B cell (primary cell): ENCODE measurements at regions of chr4 and their contacts with region 1.

Region 1: DNA sequence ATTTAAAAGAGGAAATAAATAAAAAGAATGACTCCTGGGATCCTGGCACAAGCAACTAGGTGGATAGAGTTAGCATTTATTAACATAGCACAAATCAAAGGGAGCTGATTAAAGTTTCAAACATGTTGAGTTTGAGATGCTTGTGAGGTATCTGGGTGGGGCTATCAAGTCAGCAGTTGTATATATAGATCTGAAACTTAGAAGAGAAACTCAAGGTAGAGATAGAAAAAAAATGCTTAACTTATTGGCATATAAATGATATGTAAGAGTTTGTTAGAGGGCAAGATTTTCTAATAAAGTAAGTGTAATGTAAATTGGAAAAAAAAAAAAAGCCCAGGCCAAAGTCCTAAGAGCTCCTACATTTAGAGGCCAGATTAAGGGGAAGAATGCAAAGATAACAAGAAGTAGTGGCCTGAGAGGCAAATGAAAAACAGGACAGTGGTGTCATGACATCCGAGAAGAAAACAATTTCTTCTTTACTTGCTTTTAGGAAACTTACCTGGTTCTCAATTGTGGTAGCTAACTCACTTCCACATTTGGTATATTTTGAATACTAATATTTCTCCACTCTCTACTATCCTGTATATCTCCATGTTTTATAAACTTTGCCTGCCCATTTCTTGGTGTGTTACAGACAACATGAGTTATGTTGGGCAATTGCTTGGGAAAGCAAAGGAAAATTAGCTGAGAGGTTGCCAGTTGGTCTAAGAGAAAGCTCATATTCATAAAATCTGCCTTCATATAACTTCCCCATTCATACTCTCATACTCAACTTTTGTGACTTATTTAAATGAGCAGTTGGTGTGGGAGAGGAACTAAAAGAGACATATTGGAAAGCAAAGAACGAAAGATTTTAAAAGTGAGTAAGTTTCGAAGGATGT is 169.2 kb downstream of the PARM1 start:
- DNase-seq: peak; percentile 59
- ATAC-seq: peak; percentile 52
- H3K4me3 ChIP-seq: peak overlapping the region in 1 of 5 experiments; percentile 1
- H3K4me3 Mint-ChIP-seq: peak overlapping the region; percentile 74
- H3K27ac ChIP-seq: peak overlapping the region; percentile 58 to 74
- H3K27ac Mint-ChIP-seq: peak overlapping the region; percentile 90
- H3K4me1 ChIP-seq: peaks cover 51 to 57% of the 10 kb centered on the region in 2 donors
- H3K4me1 Mint-ChIP-seq: peaks cover 56% of the 10 kb centered on the region
- H3K27me3 ChIP-seq: no peaks in the 10 kb centered on the region
- H3K27me3 Mint-ChIP-seq: no peaks in the 10 kb centered on the region
- CTCF ChIP-seq: no peak

Region 2: GRCh38 chr4:74975848-74976824 is 126.0 kb before region 1 on chr4:
- CTCF ChIA-PET with region 1: no interaction called
- POLR2A ChIA-PET with region 1: no interaction called
- intact Hi-C with region 1: no loop called
- DNase-seq: no peak
- ATAC-seq: no peak
- H3K4me3 ChIP-seq: no peak overlapping the region
- H3K4me3 Mint-ChIP-seq: no peak overlapping the region
- H3K27ac ChIP-seq: no peak overlapping the region
- H3K27ac Mint-ChIP-seq: no peak overlapping the region
- H3K4me1 ChIP-seq: no peaks in the 10 kb centered on the region
- H3K4me1 Mint-ChIP-seq: no peaks in the 10 kb centered on the region
- H3K27me3 ChIP-seq: no peaks in the 10 kb centered on the region
- H3K27me3 Mint-ChIP-seq: no peaks in the 10 kb centered on the region
- CTCF ChIP-seq: no peak

Region 3: GRCh38 chr4:75118739-75119138 is 16.6 kb after region 1 on chr4:
- CTCF ChIA-PET with region 1: interaction called, 12 read pairs
- POLR2A ChIA-PET with region 1: no interaction called
- intact Hi-C with region 1: no loop called
- DNase-seq: no peak
- ATAC-seq: no peak
- H3K4me3 ChIP-seq: no peak overlapping the region
- H3K4me3 Mint-ChIP-seq: no peak overlapping the region
- H3K27ac ChIP-seq: no peak overlapping the region
- H3K27ac Mint-ChIP-seq: no peak overlapping the region
- H3K4me1 ChIP-seq: no peaks in the 10 kb centered on the region
- H3K4me1 Mint-ChIP-seq: peaks cover 7% of the 10 kb centered on the region
- H3K27me3 ChIP-seq: no peaks in the 10 kb centered on the region
- H3K27me3 Mint-ChIP-seq: no peaks in the 10 kb centered on the region
- CTCF ChIP-seq: no peak

Region 4: DNA sequence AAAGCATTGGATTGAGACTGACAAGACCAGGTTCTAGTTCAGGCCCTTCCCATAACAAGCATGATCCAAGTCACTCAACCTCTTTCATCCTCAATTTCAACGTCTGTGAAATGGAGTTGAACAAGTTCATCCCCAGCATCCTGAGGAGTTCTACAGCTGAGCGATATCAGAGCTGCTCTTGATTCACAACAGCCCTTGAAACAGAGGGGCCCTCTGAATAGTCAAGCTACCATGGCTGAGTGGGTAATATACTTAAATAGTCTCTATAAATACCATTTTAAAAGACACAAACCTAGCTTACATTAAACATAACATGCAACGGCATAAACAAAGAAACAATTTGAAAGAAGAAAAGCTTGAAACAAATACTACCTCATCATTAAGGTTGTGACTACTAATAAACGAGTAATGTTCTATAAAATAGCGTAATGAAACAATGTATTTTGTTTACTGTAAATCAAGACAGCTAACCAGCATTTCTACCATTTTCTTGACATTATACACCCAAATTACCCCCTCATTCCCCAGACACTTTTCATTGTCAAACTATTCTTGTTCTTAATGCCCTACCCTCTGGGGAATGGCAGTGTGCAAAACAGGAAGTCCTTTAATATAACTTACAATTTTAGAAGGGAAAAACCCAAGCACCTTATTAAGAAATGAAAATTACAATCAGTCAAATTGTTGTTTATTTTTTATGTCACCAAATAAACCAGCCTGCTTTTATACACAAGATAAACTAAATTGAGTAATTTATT is 33.1 kb after region 1 on chr4:
- CTCF ChIA-PET with region 1: no interaction called
- POLR2A ChIA-PET with region 1: no interaction called
- intact Hi-C with region 1: loop called (anchors 5 kb)
- DNase-seq: peak; percentile 64
- ATAC-seq: peak; percentile 82
- H3K4me3 ChIP-seq: peak overlapping the region in 1 of 5 experiments; percentile 41
- H3K4me3 Mint-ChIP-seq: peak overlapping the region; percentile 68
- H3K27ac ChIP-seq: peak overlapping the region; percentile 75 to 79
- H3K27ac Mint-ChIP-seq: peak overlapping the region; percentile 56
- H3K4me1 ChIP-seq: peaks cover 30 to 34% of the 10 kb centered on the region in 2 donors
- H3K4me1 Mint-ChIP-seq: peaks cover 43% of the 10 kb centered on the region
- H3K27me3 ChIP-seq: no peaks in the 10 kb centered on the region
- H3K27me3 Mint-ChIP-seq: no peaks in the 10 kb centered on the region
- CTCF ChIP-seq: no peak

Region 5: GRCh38 chr4:75490155-75490554 is 388.0 kb after region 1 on chr4:
- CTCF ChIA-PET with region 1: no interaction called
- POLR2A ChIA-PET with region 1: no interaction called
- intact Hi-C with region 1: no loop called
- DNase-seq: peak; percentile 20
- ATAC-seq: no peak
- H3K4me3 ChIP-seq: no peak overlapping the region
- H3K4me3 Mint-ChIP-seq: no peak overlapping the region
- H3K27ac ChIP-seq: no peak overlapping the region
- H3K27ac Mint-ChIP-seq: no peak overlapping the region
- H3K4me1 ChIP-seq: no peaks in the 10 kb centered on the region
- H3K4me1 Mint-ChIP-seq: no peaks in the 10 kb centered on the region
- H3K27me3 ChIP-seq: no peaks in the 10 kb centered on the region
- H3K27me3 Mint-ChIP-seq: no peaks in the 10 kb centered on the region
- CTCF ChIP-seq: peak; percentile 22